SK-N-SH (cell line): ENCODE measurements at regions of chr7 and their contacts with region 1.

Region 1: DNA sequence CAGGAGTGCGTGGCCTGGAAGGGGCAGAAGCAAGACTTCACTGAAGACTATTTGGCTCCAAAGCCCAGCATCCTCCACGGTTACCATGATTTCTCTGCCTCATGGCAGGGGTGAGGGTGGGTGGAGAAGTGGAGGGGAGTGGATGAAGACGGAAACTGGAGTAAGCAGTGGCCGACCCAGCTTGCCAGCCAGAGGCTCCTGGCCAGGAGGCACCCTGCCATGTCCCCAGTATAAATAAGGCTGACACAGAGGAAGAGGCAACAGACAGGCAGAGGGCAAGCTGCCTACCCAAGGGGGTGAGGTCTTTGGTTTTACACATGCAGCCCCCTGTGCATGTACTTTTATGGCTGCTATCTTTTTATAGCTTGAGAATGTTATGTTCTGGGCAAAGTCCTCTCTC is 102.6 kb upstream of the TBX20 start:
- DNase-seq: no peak
- H3K4me3 ChIP-seq: no peak overlapping the region
- H3K27ac ChIP-seq: no peak overlapping the region
- H3K4me1 ChIP-seq: peaks cover 0 to 22% of the 10 kb centered on the region in 2 experiments; a peak in 2 of 4 replicates
- H3K27me3 ChIP-seq: no peaks in the 10 kb centered on the region
- CTCF ChIP-seq: no peak
- EP300 ChIP-seq: no peak
- RAD21 ChIP-seq: no peak

Region 2: DNA sequence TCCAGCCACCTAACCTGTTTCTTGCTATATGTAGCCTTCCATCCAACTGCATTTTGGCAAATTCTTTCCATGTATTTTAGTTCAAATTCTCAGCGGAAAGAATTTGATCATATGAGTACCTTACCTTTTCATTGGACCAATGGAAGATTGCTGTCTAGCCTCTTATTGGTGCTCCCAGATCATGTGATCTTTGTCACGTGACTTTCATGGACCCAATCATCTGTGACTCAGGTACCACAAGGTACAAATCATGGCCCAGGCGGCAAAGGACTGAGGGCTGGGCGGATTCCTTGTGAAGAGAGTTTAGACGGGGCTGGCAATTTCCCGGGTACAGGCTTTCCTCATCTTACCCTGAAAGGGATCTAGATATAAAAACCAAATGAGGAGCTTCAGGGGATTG is 16.7 kb before region 1 on chr7:
- CTCF ChIA-PET with region 1: interaction called, 11 read pairs
- POLR2A ChIA-PET with region 1: no interaction called
- DNase-seq: no peak
- H3K4me3 ChIP-seq: no peak overlapping the region
- H3K27ac ChIP-seq: no peak overlapping the region
- H3K4me1 ChIP-seq: peaks cover 0 to 11% of the 10 kb centered on the region in 2 experiments; a peak in 1 of 4 replicates
- H3K27me3 ChIP-seq: peaks cover 8% of the 10 kb centered on the region; the same call in 1 of the 2 replicates
- CTCF ChIP-seq: no peak
- EP300 ChIP-seq: no peak
- RAD21 ChIP-seq: no peak